ENCODE measurements at regions of chr3 and their contacts with region 1.

Region 1: GRCh38 chr3:50652709-50653108 is 22.0 kb upstream of the DOCK3 start:
- DNase-seq: peak in 8 of 9 experiments; percentile 29 to 72 (median 54)
- ATAC-seq: peak; percentile 61
- H3K4me3 ChIP-seq: no peak overlapping the region
- H3K4me3 Mint-ChIP-seq: no peak overlapping the region
- H3K27ac ChIP-seq: no peak overlapping the region
- H3K27ac Mint-ChIP-seq: peak overlapping the region; percentile 52
- H3K4me1 ChIP-seq: no peaks in the 10 kb centered on the region
- H3K4me1 Mint-ChIP-seq: peaks cover 1% of the 10 kb centered on the region
- H3K27me3 ChIP-seq: no peaks in the 10 kb centered on the region
- H3K27me3 Mint-ChIP-seq: no peaks in the 10 kb centered on the region
- CTCF ChIP-seq: peak; percentile 42

Region 2: DNA sequence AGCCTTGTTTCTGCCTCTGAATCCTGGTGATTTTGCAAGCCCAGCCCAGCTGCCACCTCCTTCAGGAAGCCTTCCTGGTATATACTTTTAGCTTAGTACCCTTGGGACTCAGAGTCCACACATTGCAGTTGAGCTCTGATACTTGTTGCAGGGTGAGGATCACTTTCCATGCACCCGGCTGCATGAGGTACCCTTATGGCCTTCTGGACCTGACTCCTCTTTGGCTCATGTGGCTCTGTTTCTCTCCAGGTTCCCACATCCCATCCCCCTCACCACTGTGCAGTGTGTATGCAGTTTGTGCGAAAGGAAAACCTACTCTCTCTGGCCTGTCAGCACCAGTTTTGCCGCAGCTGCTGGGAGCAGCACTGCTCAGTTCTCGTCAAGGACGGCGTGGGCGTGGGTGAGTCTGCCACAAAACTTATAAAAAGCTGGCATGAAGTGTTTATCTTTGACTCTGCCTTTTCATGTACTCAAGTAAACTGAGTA is 1685.8 kb before region 1 on chr3:
- CTCF ChIA-PET with region 1: no interaction called
- POLR2A ChIA-PET with region 1: no interaction called
- intact Hi-C with region 1: no loop called
- DNase-seq: no peak
- ATAC-seq: no peak
- H3K4me3 ChIP-seq: no peak overlapping the region
- H3K4me3 Mint-ChIP-seq: no peak overlapping the region
- H3K27ac ChIP-seq: peak overlapping the region in 1 of 2 experiments; percentile 18
- H3K27ac Mint-ChIP-seq: peak overlapping the region; percentile 70
- H3K4me1 ChIP-seq: no peaks in the 10 kb centered on the region
- H3K4me1 Mint-ChIP-seq: peaks cover 2% of the 10 kb centered on the region
- H3K27me3 ChIP-seq: no peaks in the 10 kb centered on the region
- H3K27me3 Mint-ChIP-seq: no peaks in the 10 kb centered on the region
- CTCF ChIP-seq: no peak

Region 3: DNA sequence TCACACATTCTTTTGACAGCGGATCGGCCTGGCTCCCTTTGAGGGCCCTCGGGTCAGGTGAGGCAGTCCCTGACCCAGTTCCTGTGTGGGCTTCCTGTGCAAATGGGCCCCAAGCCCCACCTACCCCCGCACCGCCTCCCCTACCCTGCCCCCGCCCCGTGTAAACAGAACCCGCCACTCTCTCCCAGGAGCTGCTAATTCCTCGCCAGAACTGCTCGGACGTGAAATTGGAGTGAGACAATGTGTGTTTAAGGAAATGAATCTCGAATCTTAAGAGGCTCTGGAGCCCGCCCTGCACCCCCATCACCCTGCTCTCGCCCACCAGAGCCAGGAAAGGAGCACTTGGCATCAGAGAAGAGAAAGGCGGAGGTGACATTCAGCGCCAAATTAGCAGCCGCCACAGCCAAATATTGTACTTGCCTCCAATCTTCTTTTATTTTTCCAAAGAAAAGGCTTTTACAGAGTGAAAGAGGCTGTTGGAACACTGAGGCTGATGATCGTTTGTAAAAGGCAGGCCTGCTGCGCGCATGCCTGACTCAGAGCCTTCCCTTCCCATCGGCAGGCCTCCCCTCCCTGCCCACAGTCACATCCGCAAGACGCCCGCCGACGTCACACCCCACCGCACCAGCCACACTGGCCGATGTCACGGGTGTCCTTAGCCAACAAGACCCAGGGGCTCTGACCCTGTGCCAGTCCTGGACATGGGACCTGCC is 202.3 kb before region 1 on chr3:
- CTCF ChIA-PET with region 1: no interaction called
- POLR2A ChIA-PET with region 1: no interaction called
- intact Hi-C with region 1: no loop called
- DNase-seq: peak; percentile 48 to 82 (median 75)
- ATAC-seq: peak; percentile 80
- H3K4me3 ChIP-seq: peak overlapping the region; percentile 43 to 54
- H3K4me3 Mint-ChIP-seq: peak overlapping the region; percentile 86
- H3K27ac ChIP-seq: peak overlapping the region; percentile 83 to 88
- H3K27ac Mint-ChIP-seq: peak overlapping the region; percentile 93
- H3K4me1 ChIP-seq: peaks cover 28% of the 10 kb centered on the region
- H3K4me1 Mint-ChIP-seq: peaks cover 32% of the 10 kb centered on the region
- H3K27me3 ChIP-seq: no peaks in the 10 kb centered on the region
- H3K27me3 Mint-ChIP-seq: no peaks in the 10 kb centered on the region
- CTCF ChIP-seq: no peak

Region 4: DNA sequence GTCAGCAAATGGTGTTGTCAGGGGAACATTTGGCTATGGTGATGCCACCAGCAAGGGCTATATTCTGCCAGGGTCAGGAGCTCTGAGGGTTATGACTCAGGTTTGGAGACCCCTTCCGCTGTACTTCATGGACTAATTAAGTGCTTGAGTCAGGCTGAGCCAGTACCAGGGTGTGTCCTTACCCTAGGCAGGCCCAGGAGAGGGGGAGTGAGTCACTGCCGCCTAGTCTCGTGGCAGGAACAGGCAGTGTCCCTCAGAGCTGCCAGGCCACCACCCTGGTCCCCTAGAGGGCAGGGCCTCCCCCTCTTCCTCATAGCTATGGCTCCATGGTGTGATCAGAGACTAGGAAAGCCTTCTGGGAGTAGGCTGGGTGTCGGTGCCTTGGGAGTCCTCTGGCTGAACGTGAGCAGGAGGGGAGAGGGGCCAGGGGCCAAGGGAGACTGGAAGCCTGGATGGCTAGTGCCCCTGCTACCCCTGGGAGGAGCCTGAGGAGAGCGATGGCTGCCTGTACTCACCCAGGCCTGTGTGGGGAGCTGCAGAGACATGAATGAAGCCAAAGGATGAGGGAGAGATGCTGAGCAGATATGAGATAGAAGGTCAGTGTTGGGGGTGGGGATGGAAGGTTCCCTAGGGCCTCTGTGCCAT is 25.2 kb before region 1 on chr3:
- CTCF ChIA-PET with region 1: interaction called, 20 read pairs
- POLR2A ChIA-PET with region 1: no interaction called
- intact Hi-C with region 1: no loop called
- DNase-seq: peak in 1 of 9 experiments; percentile 38
- ATAC-seq: no peak
- H3K4me3 ChIP-seq: no peak overlapping the region
- H3K4me3 Mint-ChIP-seq: no peak overlapping the region
- H3K27ac ChIP-seq: no peak overlapping the region
- H3K27ac Mint-ChIP-seq: no peak overlapping the region
- H3K4me1 ChIP-seq: peaks cover 92% of the 10 kb centered on the region
- H3K4me1 Mint-ChIP-seq: peaks cover 87% of the 10 kb centered on the region
- H3K27me3 ChIP-seq: no peaks in the 10 kb centered on the region
- H3K27me3 Mint-ChIP-seq: no peaks in the 10 kb centered on the region
- CTCF ChIP-seq: no peak

Measured in CD8-positive, alpha-beta T cell (primary cell).